ENCODE measurements at regions of chr4 and their contacts with region 1.

Region 1: GRCh38 chr4:186725469-186726425 is 2.1 kb upstream of the FAT1 start:
- DNase-seq: peak; percentile 94
- H3K4me3 ChIP-seq: peak overlapping the region; percentile 76 to 97 (median 86)
- H3K27ac ChIP-seq: peak overlapping the region; percentile 92 to 97 (median 95)
- H3K4me1 ChIP-seq: peaks cover 0 to 50% (median 35%) of the 10 kb centered on the region in 4 donors
- H3K27me3 ChIP-seq: peaks cover 0 to 12% (median 2%) of the 10 kb centered on the region in 4 donors
- CTCF ChIP-seq: peak; percentile 59 to 68 (median 63)
- EP300 ChIP-seq: no peak
- POLR2A ChIP-seq: no peak

Region 2: DNA sequence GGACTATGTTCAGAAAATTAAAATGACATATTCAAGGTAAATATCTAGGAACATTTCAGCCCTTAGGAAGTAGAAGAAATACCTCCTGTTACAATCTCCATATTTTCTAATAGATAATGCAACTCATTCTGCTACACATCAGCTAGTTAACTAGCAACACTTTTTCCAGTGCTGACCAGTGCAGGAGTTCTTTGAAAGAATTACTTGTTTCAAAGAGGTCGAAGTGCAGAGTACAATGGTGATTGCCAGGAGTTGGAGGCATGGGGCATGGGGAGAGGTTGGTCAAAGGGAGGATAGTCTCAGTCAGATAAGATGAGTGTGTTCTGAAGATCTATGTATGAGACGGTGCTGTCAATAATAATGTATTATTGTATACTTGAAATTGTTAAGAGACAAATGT is 223.5 kb before region 1 on chr4:
- intact Hi-C with region 1: no loop called
- DNase-seq: no peak
- H3K4me3 ChIP-seq: no peak overlapping the region
- H3K27ac ChIP-seq: no peak overlapping the region
- H3K4me1 ChIP-seq: no peaks in the 10 kb centered on the region
- H3K27me3 ChIP-seq: peaks cover 0 to 12% (median 0%) of the 10 kb centered on the region in 4 donors
- CTCF ChIP-seq: no peak
- EP300 ChIP-seq: no peak
- POLR2A ChIP-seq: no peak

Region 3: GRCh38 chr4:186669159-186669731 is 56.5 kb before region 1 on chr4:
- intact Hi-C with region 1: loop called (anchors 2 kb)
- DNase-seq: no peak
- H3K4me3 ChIP-seq: peak overlapping the region; percentile 11 to 39 (median 28)
- H3K27ac ChIP-seq: peak overlapping the region; percentile 65 to 76 (median 75)
- H3K4me1 ChIP-seq: peaks cover 15 to 65% (median 55%) of the 10 kb centered on the region in 4 donors
- H3K27me3 ChIP-seq: no peaks in the 10 kb centered on the region
- CTCF ChIP-seq: peak; percentile 55 to 66 (median 58)
- EP300 ChIP-seq: peak; percentile 94
- POLR2A ChIP-seq: no peak

Region 4: GRCh38 chr4:186946682-186947294 is 221.0 kb after region 1 on chr4:
- intact Hi-C with region 1: loop called (anchors 10 kb)
- DNase-seq: no peak
- H3K4me3 ChIP-seq: no peak overlapping the region
- H3K27ac ChIP-seq: no peak overlapping the region
- H3K4me1 ChIP-seq: peaks cover 0 to 11% (median 10%) of the 10 kb centered on the region in 4 donors
- H3K27me3 ChIP-seq: peaks cover 0 to 4% (median 0%) of the 10 kb centered on the region in 4 donors
- CTCF ChIP-seq: peak in 2 of 3 experiments; percentile 13 to 29
- EP300 ChIP-seq: no peak
- POLR2A ChIP-seq: no peak